ENCODE measurements at regions of chr4 and their contacts with region 1.

Region 1: GRCh38 chr4:44760142-44760898 is 34.0 kb upstream of the GNPDA2 start:
- DNase-seq: no peak

Region 2: GRCh38 chr4:44623676-44624075 is 136.6 kb before region 1 on chr4:
- intact Hi-C with region 1: no loop called
- DNase-seq: no peak

Region 3: DNA sequence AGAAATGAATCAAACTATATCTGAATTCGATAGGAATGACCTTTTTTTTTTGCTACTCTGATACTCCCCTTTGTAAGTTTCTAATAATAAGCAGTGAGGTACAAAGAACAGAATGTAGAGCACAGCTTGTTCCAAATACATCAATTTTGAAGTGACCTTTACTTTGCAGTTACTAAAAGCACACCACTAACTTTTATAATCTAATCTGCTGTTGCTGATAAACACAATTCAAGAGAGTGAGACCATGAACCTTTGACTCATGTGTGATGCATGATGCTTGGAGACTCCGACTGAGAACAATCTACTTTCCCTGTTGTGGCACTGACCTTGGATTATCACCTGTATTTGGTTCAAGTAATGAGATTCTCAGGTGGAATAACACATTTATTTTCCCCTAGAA is 57.6 kb after region 1 on chr4:
- intact Hi-C with region 1: loop called (anchors 10 kb)
- DNase-seq: no peak

Region 4: GRCh38 chr4:44848466-44848865 is 88.1 kb after region 1 on chr4:
- intact Hi-C with region 1: no loop called
- DNase-seq: no peak

Region 5: GRCh38 chr4:45442466-45442865 is 682.1 kb after region 1 on chr4:
- intact Hi-C with region 1: loop called (anchors 10 kb)
- DNase-seq: no peak

Region 6: DNA sequence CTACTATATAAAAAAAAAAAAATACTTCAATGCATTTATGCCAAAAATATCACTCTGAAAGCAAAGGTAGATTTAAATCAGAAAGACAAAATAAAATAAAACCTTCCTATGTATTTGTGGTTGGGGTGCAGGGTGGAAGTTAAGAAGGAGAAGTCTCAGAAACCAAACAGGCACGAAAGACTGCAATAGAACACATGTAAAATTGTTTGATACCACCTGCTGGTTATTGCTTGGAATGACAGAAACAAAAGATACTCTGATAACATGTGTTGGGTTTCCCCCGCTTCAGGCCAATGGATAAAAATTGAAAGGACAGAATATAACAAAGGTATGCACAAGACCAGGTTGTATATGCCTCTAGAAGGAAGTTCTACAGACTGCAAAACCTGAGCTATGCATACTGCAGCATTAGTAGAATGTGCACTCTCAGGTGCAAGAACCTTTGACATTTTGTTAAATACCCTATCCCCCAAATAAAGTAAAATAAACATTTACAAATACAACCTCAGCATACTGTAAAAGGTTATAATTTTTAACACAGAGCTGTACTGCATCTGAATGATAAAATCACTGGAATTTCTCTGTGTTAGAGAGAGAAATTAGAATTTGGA is 1510.8 kb after region 1 on chr4:
- intact Hi-C with region 1: loop called (anchors 5 kb)
- DNase-seq: no peak